Activated naive CD4-positive, alpha-beta T cell treated with anti-CD3 and anti-CD28 coated beads for 36 hours (primary cell): ENCODE measurements at regions of chr2 and their contacts with region 1.

Region 1: DNA sequence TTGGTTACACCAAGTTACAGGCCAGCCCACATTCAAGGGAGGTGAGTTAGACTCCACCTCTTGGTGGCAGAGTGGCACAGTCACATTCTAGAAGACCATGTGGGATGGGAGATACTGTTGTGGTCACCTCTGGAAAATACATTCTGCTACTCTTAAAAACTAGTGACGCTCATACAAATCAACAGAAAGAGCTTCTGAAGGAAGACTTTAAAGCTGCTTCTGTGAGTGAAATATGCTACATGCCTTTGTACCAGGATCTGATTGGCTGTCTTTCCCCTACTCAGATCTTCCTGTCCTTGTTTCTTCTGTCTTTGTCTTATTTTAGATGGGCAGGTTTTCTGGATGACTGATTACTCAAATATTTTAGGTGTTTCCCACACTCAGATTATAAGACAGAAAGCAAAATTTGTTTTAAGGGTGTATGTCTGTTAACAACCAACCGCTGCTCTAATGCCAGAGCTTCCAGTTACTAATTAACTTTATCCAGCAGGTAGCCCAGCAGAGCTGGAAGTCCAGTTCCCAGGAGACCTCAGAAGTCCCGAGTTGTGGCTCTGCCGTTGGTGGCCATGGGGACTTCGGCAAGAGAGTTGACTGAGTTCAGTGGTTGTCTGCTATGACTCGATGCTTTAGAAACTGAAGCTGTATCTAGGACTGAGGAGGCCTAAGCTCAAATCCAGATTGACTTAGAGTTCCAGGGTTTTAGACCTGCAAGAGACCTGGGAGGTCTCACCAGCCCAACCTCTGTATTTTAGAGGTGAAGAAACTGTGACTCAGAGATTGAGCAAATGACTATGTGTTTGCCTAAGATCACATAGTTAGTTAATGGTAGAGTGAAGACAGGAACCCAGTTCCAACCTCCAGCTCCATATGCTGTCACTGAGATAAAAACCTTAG is 7.4 kb downstream of the IL1R2 start:
- DNase-seq: peak; percentile 73
- H3K4me3 Mint-ChIP-seq: peak overlapping the region; percentile 42
- H3K27ac Mint-ChIP-seq: peak overlapping the region; percentile 90
- H3K4me1 Mint-ChIP-seq: peaks cover 38% of the 10 kb centered on the region
- H3K27me3 Mint-ChIP-seq: no peaks in the 10 kb centered on the region

Region 2: DNA sequence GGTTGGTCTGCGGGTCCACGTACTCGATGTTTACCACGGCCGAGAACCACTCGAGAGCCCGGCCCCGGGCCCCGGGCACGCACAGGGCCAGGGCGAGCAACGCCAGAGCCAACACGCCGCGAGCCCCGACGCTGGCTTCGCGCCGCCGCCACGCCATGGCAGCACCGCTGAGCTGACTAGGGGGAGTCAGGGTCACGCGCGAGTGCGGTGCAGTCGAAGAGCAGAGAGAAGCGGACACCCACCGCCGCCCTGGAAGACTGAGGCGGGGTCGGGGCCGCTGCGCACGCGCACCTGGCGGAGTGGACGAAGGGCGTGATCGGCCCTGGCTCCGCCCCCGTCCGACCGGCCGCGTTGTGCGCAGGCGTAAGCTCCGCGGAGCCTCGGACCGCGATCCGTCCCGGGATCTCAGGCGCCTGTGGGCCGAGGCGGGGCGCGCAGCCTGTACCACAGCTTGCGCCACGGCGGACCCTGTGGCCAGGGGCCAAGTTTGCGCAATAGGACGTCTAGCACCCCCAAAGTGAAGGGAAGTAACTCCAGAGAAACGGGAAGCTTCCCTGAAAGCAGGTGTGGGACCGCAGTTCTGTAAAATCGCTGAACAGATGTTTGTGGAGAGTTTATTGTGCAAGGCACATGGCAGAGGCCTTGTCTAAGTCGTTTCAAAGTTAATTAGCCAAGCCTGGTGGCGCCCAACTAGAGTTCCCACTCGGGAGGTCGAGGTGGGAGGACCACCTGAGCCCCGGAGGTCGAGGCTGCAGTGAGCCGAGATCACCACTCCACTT is 690.5 kb before region 1 on chr2 and contains the start of gene RNF149:
- CTCF ChIA-PET with region 1: no interaction called
- intact Hi-C with region 1: loop called (anchors 1 kb)
- DNase-seq: peak; percentile 87
- H3K4me3 Mint-ChIP-seq: peak within 1 kb of the TSS; percentile 82
- H3K27ac Mint-ChIP-seq: peak within 1 kb of the TSS; percentile 88
- H3K4me1 Mint-ChIP-seq: peaks cover 62% of the 10 kb centered on the region
- H3K27me3 Mint-ChIP-seq: no peaks in the 10 kb centered on the region
- total RNA-seq, gene RNF149: 25.0 to 27.1 TPM

Region 3: GRCh38 chr2:101736861-101737291 is 262.3 kb before region 1 on chr2:
- CTCF ChIA-PET with region 1: no interaction called
- intact Hi-C with region 1: loop called (anchors 1 kb)
- DNase-seq: peak; percentile 77
- H3K4me3 Mint-ChIP-seq: peak overlapping the region; percentile 8
- H3K27ac Mint-ChIP-seq: peak overlapping the region; percentile 89
- H3K4me1 Mint-ChIP-seq: peaks cover 90% of the 10 kb centered on the region
- H3K27me3 Mint-ChIP-seq: no peaks in the 10 kb centered on the region

Region 4: GRCh38 chr2:102013206-102014040 is 14.3 kb after region 1 on chr2:
- CTCF ChIA-PET with region 1: interaction called, 37 read pairs
- intact Hi-C with region 1: loop called (anchors 1 kb)
- DNase-seq: peak; percentile 44
- H3K4me3 Mint-ChIP-seq: no peak overlapping the region
- H3K27ac Mint-ChIP-seq: peak overlapping the region; percentile 69
- H3K4me1 Mint-ChIP-seq: peaks cover 37% of the 10 kb centered on the region
- H3K27me3 Mint-ChIP-seq: no peaks in the 10 kb centered on the region

Region 5: DNA sequence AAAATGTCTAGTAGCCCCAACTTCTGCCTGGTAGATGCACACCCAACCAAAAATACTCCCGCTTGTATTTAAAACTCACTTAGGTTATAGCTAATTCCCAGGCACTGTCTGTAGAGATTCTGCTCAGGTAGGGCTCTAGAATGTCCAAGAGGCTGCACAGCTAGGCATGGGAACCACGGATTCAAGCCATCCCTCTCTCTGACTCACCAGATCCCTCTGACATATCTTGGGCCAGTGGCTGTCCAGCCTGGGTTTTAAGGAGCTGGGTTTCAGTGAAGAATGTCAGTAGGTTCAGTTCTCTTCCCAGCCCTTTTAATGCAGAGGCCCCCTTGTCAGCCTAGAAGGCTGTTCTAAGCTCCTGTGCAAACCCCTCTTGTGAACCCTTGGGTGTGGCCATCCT is 127.5 kb after region 1 on chr2:
- CTCF ChIA-PET with region 1: no interaction called
- intact Hi-C with region 1: loop called (anchors 1 kb)
- DNase-seq: no peak
- H3K4me3 Mint-ChIP-seq: no peak overlapping the region
- H3K27ac Mint-ChIP-seq: peak overlapping the region; percentile 81
- H3K4me1 Mint-ChIP-seq: peaks cover 31% of the 10 kb centered on the region
- H3K27me3 Mint-ChIP-seq: peaks cover 3% of the 10 kb centered on the region

Region 6: DNA sequence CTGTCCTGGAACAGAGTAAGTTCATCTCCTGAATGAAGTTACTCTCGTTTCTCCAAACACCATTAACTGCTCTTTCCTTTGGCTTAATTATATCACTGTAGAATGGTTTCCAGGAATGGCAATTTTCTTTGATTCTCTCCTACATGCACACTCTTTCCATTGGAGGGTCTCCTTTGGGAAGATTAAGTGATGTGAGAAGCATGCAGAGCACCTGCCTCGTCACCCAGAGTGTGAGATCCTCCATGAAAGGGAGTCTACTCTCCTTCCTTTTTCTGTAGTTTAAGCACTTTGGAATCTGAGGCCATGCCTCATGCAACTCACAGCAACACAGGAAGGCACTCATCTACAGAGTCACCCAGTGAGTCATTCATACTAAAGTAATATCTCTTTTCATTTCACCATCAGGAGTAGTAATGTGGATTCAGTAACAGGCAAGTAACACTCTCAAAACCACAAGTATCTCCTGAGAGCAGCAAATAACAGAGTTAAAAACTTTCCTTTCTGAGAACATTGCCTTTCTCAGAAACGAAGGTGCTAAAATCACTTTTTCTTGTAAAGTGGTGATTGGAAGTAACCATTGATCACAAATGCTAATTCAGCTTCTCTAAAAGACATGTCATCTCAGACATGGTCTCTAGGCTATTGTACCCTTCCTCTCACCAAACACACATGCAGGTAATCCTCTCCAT is 259.4 kb after region 1 on chr2:
- CTCF ChIA-PET with region 1: no interaction called
- intact Hi-C with region 1: loop called (anchors 1 kb)
- DNase-seq: peak; percentile 71
- H3K4me3 Mint-ChIP-seq: no peak overlapping the region
- H3K27ac Mint-ChIP-seq: peak overlapping the region; percentile 95
- H3K4me1 Mint-ChIP-seq: peaks cover 46% of the 10 kb centered on the region
- H3K27me3 Mint-ChIP-seq: no peaks in the 10 kb centered on the region

Region 7: GRCh38 chr2:102657770-102658169 is 658.6 kb after region 1 on chr2:
- CTCF ChIA-PET with region 1: no interaction called
- intact Hi-C with region 1: loop called (anchors 5 kb)
- DNase-seq: peak; percentile 83
- H3K4me3 Mint-ChIP-seq: no peak overlapping the region
- H3K27ac Mint-ChIP-seq: peak overlapping the region; percentile 88
- H3K4me1 Mint-ChIP-seq: peaks cover 21% of the 10 kb centered on the region
- H3K27me3 Mint-ChIP-seq: peaks cover 7% of the 10 kb centered on the region